Activated naive CD4-positive, alpha-beta T cell treated with anti-CD3 and anti-CD28 coated beads for 36 hours (primary cell): ENCODE measurements at regions of chr2 and their contacts with region 1.

Region 1: GRCh38 chr2:162123806-162124758 is 28.0 kb downstream of the GCG start:
- DNase-seq: no peak
- H3K4me3 Mint-ChIP-seq: no peak overlapping the region
- H3K27ac Mint-ChIP-seq: no peak overlapping the region
- H3K4me1 Mint-ChIP-seq: peaks cover 3% of the 10 kb centered on the region
- H3K27me3 Mint-ChIP-seq: no peaks in the 10 kb centered on the region

Region 2: GRCh38 chr2:161414042-161415033 is 709.7 kb before region 1 on chr2:
- CTCF ChIA-PET with region 1: no interaction called
- intact Hi-C with region 1: loop called (anchors 5 kb)
- DNase-seq: no peak
- H3K4me3 Mint-ChIP-seq: peak overlapping the region; percentile 52
- H3K27ac Mint-ChIP-seq: no peak overlapping the region
- H3K4me1 Mint-ChIP-seq: peaks cover 47% of the 10 kb centered on the region
- H3K27me3 Mint-ChIP-seq: peaks cover 51% of the 10 kb centered on the region

Region 3: GRCh38 chr2:161946489-161947107 is 177.5 kb before region 1 on chr2:
- CTCF ChIA-PET with region 1: interaction called, 29 read pairs
- intact Hi-C with region 1: loop called (anchors 1 kb)
- DNase-seq: peak; percentile 38
- H3K4me3 Mint-ChIP-seq: no peak overlapping the region
- H3K27ac Mint-ChIP-seq: no peak overlapping the region
- H3K4me1 Mint-ChIP-seq: peaks cover 15% of the 10 kb centered on the region
- H3K27me3 Mint-ChIP-seq: no peaks in the 10 kb centered on the region

Region 4: DNA sequence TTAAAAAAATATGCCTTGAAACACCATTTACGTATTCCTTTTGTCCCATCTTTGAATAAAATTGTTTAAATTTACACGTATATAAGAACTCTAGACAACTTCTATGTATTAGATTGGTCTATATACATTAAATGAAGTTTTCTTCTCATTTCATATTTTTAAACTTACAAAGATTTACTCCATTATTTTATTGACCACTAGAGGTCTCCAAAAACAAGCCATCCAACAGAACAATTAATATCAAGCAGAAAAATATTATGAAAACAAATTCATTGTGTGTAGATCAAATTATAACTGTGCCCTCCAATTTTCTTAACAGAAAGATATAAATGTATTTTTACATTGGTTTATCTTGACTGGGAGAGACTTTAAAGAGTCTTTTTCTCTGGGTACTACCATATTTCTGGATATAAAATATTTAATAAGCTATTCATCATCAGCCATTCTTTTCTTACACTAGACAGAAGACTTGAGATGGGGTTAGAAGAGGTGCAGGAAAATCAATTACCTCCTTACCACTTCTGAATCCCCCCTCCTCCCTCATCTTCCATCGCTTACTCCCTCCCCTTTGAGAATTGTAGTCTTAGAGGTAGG is 116.5 kb before region 1 on chr2:
- CTCF ChIA-PET with region 1: interaction called, 25 read pairs
- intact Hi-C with region 1: loop called (anchors 1 kb)
- DNase-seq: no peak
- H3K4me3 Mint-ChIP-seq: no peak overlapping the region
- H3K27ac Mint-ChIP-seq: no peak overlapping the region
- H3K4me1 Mint-ChIP-seq: peaks cover 37% of the 10 kb centered on the region
- H3K27me3 Mint-ChIP-seq: no peaks in the 10 kb centered on the region

Region 5: GRCh38 chr2:162153608-162154224 is 29.6 kb after region 1 on chr2:
- CTCF ChIA-PET with region 1: interaction called, 14 read pairs
- intact Hi-C with region 1: no loop called
- DNase-seq: peak; percentile 81
- H3K4me3 Mint-ChIP-seq: no peak overlapping the region
- H3K27ac Mint-ChIP-seq: no peak overlapping the region
- H3K4me1 Mint-ChIP-seq: no peaks in the 10 kb centered on the region
- H3K27me3 Mint-ChIP-seq: peaks cover 14% of the 10 kb centered on the region

Region 6: DNA sequence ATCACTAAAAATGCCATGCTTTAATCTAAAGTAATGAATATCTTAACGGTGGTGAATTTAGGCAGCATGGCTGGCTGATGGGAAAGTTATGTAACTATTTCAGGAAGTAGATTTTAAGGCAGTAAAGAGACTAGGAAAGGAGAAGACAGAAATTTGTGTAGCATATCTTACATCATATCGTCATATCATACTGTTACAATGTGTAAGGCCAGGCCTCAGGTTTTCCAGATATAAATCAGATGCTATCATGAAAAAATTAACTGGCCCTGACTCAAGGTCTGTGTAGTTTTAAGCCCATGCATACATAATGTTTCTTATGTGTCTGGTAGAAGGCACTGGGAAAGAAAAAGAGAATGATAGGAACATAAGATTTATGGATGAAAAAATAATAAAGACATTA is 128.1 kb after region 1 on chr2:
- CTCF ChIA-PET with region 1: no interaction called
- intact Hi-C with region 1: no loop called
- DNase-seq: no peak
- H3K4me3 Mint-ChIP-seq: no peak overlapping the region
- H3K27ac Mint-ChIP-seq: no peak overlapping the region
- H3K4me1 Mint-ChIP-seq: no peaks in the 10 kb centered on the region
- H3K27me3 Mint-ChIP-seq: peaks cover 4% of the 10 kb centered on the region